ENCODE measurements at regions of chr5 and their contacts with region 1.

Region 1: DNA sequence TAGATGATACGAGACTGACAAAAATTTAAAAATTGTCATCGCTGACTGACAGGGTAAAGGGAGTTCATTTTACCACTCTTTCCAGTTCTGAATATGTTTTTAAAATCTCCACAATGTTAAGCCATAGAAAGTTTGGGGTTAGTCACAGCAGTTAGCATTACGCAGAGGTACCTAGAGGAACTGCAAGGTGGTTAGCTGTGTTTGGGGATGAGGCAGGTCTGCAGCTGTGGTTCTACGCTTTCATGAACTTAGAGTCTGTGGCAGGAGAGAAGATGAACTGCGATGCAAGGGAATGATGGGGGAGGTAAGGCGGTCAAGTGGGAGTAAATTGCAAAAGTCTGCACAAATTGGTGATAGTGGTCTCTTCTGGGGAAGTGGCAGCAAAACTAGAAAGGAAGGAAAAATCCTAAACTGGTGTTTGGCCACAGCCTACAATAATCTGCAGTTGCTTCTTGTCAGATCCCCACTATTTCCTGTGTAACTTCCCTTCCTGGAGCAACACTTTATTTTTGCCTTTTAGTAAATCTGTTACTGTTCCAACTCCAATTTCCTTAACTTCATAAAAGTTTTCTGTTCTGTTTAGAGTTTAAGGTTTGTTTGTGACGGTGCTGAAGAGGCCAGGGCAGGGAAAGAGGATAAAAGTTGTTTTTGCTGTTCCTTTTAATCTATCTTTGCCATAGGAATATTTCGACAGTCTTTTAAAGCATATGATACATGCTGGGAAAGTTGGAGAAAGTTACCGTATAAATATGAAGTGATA is 38.6 kb upstream of the SNX2 start:
- DNase-seq: no peak
- H3K4me3 ChIP-seq: no peak overlapping the region
- H3K27ac ChIP-seq: no peak overlapping the region
- H3K4me1 ChIP-seq: peaks cover 0 to 9% (median 4%) of the 10 kb centered on the region in 4 donors
- H3K27me3 ChIP-seq: no peaks in the 10 kb centered on the region
- CTCF ChIP-seq: no peak
- EP300 ChIP-seq: no peak
- POLR2A ChIP-seq: no peak

Region 2: DNA sequence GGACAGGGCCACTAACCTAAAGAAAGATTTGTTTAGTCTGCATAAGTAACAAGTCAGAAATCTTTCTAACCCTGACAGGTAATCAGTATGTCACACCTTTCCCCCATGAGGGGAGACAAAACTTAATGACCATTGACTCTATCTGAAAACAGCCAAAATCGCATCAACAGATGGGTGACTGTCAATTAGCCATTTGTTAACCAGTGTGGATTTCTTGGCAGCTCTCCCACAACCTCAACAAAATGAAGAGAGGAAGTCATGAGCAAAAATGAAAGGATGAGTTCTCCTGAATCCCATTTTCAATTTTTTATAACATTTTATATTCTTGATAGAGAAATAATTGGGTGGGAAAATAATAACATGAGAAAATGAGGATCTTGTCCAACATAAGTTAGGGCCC is 46.0 kb before region 1 on chr5:
- in situ Hi-C with region 1: no loop called
- intact Hi-C with region 1: loop called (anchors 2 kb)
- DNase-seq: no peak
- H3K4me3 ChIP-seq: no peak overlapping the region
- H3K27ac ChIP-seq: no peak overlapping the region
- H3K4me1 ChIP-seq: no peaks in the 10 kb centered on the region
- H3K27me3 ChIP-seq: no peaks in the 10 kb centered on the region
- CTCF ChIP-seq: no peak
- EP300 ChIP-seq: no peak
- POLR2A ChIP-seq: no peak

Region 3: GRCh38 chr5:122915717-122916461 is 179.6 kb after region 1 on chr5:
- in situ Hi-C with region 1: no loop called
- intact Hi-C with region 1: no loop called
- DNase-seq: no peak
- H3K4me3 ChIP-seq: no peak overlapping the region
- H3K27ac ChIP-seq: peak overlapping the region; percentile 22 to 54 (median 39)
- H3K4me1 ChIP-seq: peaks cover 0 to 10% (median 0%) of the 10 kb centered on the region in 4 donors
- H3K27me3 ChIP-seq: no peaks in the 10 kb centered on the region
- CTCF ChIP-seq: no peak
- EP300 ChIP-seq: no peak
- POLR2A ChIP-seq: no peak

Region 4: DNA sequence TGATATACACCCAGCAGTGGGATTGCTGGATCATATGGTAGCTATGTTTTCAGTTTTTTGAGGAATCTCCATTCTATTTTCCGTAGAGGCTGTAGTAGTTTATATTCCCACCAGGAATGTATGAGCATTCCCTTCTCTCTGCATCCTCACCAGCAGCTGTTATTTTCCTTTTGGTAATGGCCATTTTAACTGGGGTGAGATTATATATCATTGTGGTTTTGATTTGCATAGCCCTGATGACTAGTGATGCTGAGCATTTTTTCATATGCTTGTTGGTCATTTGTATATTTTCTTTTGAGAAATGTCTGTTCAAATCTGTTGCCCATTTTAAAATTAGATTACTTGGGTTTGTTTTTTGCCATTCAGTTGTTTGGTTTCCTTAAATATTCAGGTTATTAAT is 311.4 kb after region 1 on chr5:
- in situ Hi-C with region 1: no loop called
- intact Hi-C with region 1: no loop called
- DNase-seq: no peak
- H3K4me3 ChIP-seq: no peak overlapping the region
- H3K27ac ChIP-seq: no peak overlapping the region
- H3K4me1 ChIP-seq: no peaks in the 10 kb centered on the region
- H3K27me3 ChIP-seq: no peaks in the 10 kb centered on the region
- CTCF ChIP-seq: no peak
- EP300 ChIP-seq: no peak
- POLR2A ChIP-seq: no peak

Measured in transverse colon (tissue), 4 donors.